ENCODE measurements at regions of chr20 and their contacts with region 1.

Region 1: GRCh38 chr20:3045816-3046676 is at the start of gene MRPS26:
- DNase-seq: peak; percentile 76 to 91
- H3K4me3 ChIP-seq: peak within 1 kb of the TSS; percentile 99
- H3K27ac ChIP-seq: no peak within 1 kb of the TSS
- H3K4me1 ChIP-seq: 0 out of 2 replicates have a peak, but pooled peaks cover 10% of the 10 kb centered on the region
- H3K27me3 ChIP-seq: no peaks in the 10 kb centered on the region
- CTCF ChIP-seq: no peak
- total RNA-seq, gene MRPS26: 58.3 and 84.9 TPM in 2 replicates

Region 2: GRCh38 chr20:3067139-3068009 is 21.3 kb after region 1 on chr20:
- CTCF ChIA-PET with region 1: no interaction called
- POLR2A ChIA-PET with region 1: no interaction called
- intact Hi-C with region 1: no loop called
- DNase-seq: peak; percentile 40 to 66
- H3K4me3 ChIP-seq: no peak overlapping the region
- H3K27ac ChIP-seq: peak overlapping the region; percentile 68
- H3K4me1 ChIP-seq: peaks cover 40% of the 10 kb centered on the region
- H3K27me3 ChIP-seq: no peaks in the 10 kb centered on the region
- CTCF ChIP-seq: no peak

Region 3: GRCh38 chr20:3115190-3116107 is 69.4 kb after region 1 on chr20:
- CTCF ChIA-PET with region 1: interaction called, 13 read pairs
- POLR2A ChIA-PET with region 1: no interaction called
- intact Hi-C with region 1: no loop called
- DNase-seq: peak; percentile 33 to 46
- H3K4me3 ChIP-seq: no peak overlapping the region
- H3K27ac ChIP-seq: no peak overlapping the region
- H3K4me1 ChIP-seq: no peaks in the 10 kb centered on the region
- H3K27me3 ChIP-seq: no peaks in the 10 kb centered on the region
- CTCF ChIP-seq: peak; percentile 81

Region 4: DNA sequence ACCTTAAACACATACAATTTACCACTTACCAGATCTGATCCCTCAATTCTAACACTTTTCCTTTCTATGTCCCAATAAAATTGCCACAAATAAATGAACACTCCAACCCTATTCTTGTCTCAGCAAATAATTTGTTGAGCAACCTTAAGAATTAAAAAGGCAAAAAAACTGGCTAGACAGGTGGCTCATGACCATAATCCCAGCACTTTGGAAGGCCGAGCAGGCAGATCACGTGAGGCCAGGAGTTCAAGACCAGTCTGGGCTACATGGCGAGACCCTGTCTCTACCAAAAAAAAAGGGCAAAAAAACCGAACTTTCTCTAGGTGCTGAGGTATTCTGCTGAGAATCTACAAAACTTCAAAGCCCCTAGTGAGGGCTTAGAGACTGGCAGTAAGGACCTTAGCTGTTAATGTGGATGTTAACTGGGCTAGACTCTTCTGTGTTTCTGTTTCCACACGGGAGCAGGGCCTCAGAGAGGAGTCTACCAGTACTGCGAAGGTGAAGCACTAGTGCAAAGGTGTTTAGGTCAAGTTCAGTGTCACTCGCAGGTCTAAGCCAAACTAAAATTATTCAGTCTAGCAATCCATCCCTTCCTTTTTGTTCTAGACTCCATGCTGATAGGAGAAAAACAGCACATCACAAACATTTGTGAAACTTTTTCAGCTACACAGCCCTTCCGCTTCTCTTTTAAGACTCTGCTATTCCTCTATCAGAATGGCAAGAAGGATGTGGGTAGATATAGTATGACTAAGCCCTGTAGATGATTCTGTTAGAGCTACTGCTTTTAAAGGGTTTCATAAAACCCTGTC is 111.0 kb after region 1 on chr20:
- CTCF ChIA-PET with region 1: interaction called, 10 read pairs
- POLR2A ChIA-PET with region 1: no interaction called
- intact Hi-C with region 1: no loop called
- DNase-seq: no peak
- H3K4me3 ChIP-seq: no peak overlapping the region; the same call in 1 of the 2 replicates
- H3K27ac ChIP-seq: no peak overlapping the region
- H3K4me1 ChIP-seq: peaks cover 21% of the 10 kb centered on the region
- H3K27me3 ChIP-seq: no peaks in the 10 kb centered on the region
- CTCF ChIP-seq: no peak

Region 5: GRCh38 chr20:3670511-3670910 is 624.5 kb after region 1 on chr20:
- CTCF ChIA-PET with region 1: no interaction called
- POLR2A ChIA-PET with region 1: interaction called, 33 read pairs
- intact Hi-C with region 1: no loop called
- DNase-seq: no peak
- H3K4me3 ChIP-seq: no peak overlapping the region
- H3K27ac ChIP-seq: no peak overlapping the region
- H3K4me1 ChIP-seq: no peaks in the 10 kb centered on the region
- H3K27me3 ChIP-seq: peaks cover 23% of the 10 kb centered on the region
- CTCF ChIP-seq: peak; percentile 33; the same call in 1 of the 2 replicates

Region 6: GRCh38 chr20:3826420-3826819 is 780.4 kb after region 1 on chr20:
- CTCF ChIA-PET with region 1: no interaction called
- POLR2A ChIA-PET with region 1: interaction called, 24 read pairs
- intact Hi-C with region 1: no loop called
- DNase-seq: no peak
- H3K4me3 ChIP-seq: no peak overlapping the region
- H3K27ac ChIP-seq: no peak overlapping the region
- H3K4me1 ChIP-seq: peaks cover 2% of the 10 kb centered on the region; the same call in 1 of the 2 replicates
- H3K27me3 ChIP-seq: no peaks in the 10 kb centered on the region
- CTCF ChIP-seq: no peak